Activated naive CD4-positive, alpha-beta T cell treated with anti-CD3 and anti-CD28 coated beads, Interleukin-2, amount 10 ng/mL, durations not matched to agents 7 days and 5 days (primary cell): ENCODE measurements at regions of chr10 and their contacts with region 1.

Region 1: GRCh38 chr10:102752934-102753664 is 9.4 kb downstream of the WBP1L start:
- DNase-seq: peak; percentile 32
- H3K4me3 Mint-ChIP-seq: no peak overlapping the region
- H3K27ac Mint-ChIP-seq: no peak overlapping the region
- H3K4me1 Mint-ChIP-seq: peaks cover 39% of the 10 kb centered on the region
- H3K27me3 Mint-ChIP-seq: no peaks in the 10 kb centered on the region

Region 2: GRCh38 chr10:102776779-102777456 is 23.8 kb after region 1 on chr10:
- CTCF ChIA-PET with region 1: interaction called, 27 read pairs
- DNase-seq: no peak
- H3K4me3 Mint-ChIP-seq: no peak overlapping the region
- H3K27ac Mint-ChIP-seq: no peak overlapping the region
- H3K4me1 Mint-ChIP-seq: peaks cover 39% of the 10 kb centered on the region
- H3K27me3 Mint-ChIP-seq: no peaks in the 10 kb centered on the region

Region 3: DNA sequence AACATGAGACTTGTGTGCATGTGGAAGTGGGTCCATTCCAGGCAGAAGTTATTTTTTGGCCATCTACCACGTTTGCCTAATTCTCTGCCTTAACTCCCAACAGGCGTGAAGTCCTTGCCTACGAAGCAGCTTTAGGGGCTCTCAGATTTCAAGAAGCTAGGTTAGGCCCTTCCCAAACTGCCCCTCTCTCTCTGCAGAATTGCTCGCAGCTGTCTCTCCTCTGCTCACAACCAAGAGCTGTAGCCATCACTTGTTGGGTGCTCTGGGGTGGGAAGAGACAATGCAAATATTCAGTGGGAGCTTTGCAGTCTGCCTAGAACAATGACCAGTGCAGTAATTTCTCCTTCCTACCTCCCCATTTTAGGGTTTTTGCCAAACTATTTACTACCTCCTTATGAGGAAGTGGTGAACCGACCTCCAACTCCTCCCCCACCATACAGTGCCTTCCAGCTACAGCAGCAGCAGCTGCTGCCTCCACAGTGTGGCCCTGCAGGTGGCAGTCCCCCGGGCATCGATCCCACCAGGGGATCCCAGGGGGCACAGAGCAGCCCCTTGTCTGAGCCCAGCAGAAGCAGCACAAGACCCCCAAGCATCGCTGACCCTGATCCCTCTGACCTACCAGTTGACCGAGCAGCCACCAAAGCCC is 59.3 kb after region 1 on chr10:
- CTCF ChIA-PET with region 1: interaction called, 10 read pairs
- DNase-seq: peak; percentile 60
- H3K4me3 Mint-ChIP-seq: no peak overlapping the region
- H3K27ac Mint-ChIP-seq: peak overlapping the region; percentile 89
- H3K4me1 Mint-ChIP-seq: peaks cover 28% of the 10 kb centered on the region
- H3K27me3 Mint-ChIP-seq: no peaks in the 10 kb centered on the region